CD8-positive, alpha-beta memory T cell (primary cell): ENCODE measurements at regions of chr12 and their contacts with region 1.

Region 1: DNA sequence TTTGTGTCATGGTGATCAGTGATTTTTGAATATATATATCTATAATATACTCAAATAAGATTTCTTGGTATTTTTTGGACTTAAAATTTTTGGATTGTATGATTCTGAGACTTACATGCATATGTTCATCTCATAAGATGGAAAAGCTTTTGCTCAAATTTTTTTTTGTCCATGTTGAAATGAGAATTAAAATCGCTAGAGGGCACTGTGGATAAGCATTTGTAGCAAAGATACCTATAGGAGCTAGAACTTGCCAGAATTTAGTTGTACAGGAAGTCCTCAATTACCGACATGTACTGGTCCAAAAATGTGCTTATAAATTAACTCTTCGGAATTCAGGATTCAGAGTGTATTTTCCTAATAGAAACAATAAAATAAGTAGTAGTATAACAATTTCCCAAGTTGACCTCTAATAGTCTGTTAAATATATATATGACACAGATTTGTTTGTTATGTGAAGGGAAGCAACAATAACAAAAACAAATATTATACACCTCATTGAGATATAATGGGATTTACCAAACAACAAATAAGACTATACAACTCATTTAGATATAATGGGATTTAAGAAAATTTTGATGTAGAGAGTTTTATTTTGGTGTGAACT is 179.6 kb downstream of the TMEM117 start:
- DNase-seq: peak in 2 of 5 donors; percentile 24 to 42
- H3K4me3 ChIP-seq: no peak overlapping the region
- H3K4me3 Mint-ChIP-seq: no peak overlapping the region
- H3K27ac ChIP-seq: no peak overlapping the region
- H3K27ac Mint-ChIP-seq: no peak overlapping the region
- H3K4me1 ChIP-seq: no peaks in the 10 kb centered on the region
- H3K4me1 Mint-ChIP-seq: peaks cover 0 to 3% (median 0%) of the 10 kb centered on the region in 3 donors
- H3K27me3 ChIP-seq: no peaks in the 10 kb centered on the region
- H3K27me3 Mint-ChIP-seq: peaks cover 0 to 2% of the 10 kb centered on the region in 2 donors

Region 2: GRCh38 chr12:43444940-43445564 is 570.4 kb before region 1 on chr12:
- CTCF ChIA-PET with region 1: no interaction called
- POLR2A ChIA-PET with region 1: no interaction called
- DNase-seq: peak; percentile 1 to 46 (median 21)
- H3K4me3 ChIP-seq: no peak overlapping the region
- H3K4me3 Mint-ChIP-seq: no peak overlapping the region
- H3K27ac ChIP-seq: no peak overlapping the region
- H3K27ac Mint-ChIP-seq: no peak overlapping the region
- H3K4me1 ChIP-seq: no peaks in the 10 kb centered on the region
- H3K4me1 Mint-ChIP-seq: no peaks in the 10 kb centered on the region
- H3K27me3 ChIP-seq: no peaks in the 10 kb centered on the region
- H3K27me3 Mint-ChIP-seq: peaks cover 0 to 2% of the 10 kb centered on the region in 2 donors

Region 3: DNA sequence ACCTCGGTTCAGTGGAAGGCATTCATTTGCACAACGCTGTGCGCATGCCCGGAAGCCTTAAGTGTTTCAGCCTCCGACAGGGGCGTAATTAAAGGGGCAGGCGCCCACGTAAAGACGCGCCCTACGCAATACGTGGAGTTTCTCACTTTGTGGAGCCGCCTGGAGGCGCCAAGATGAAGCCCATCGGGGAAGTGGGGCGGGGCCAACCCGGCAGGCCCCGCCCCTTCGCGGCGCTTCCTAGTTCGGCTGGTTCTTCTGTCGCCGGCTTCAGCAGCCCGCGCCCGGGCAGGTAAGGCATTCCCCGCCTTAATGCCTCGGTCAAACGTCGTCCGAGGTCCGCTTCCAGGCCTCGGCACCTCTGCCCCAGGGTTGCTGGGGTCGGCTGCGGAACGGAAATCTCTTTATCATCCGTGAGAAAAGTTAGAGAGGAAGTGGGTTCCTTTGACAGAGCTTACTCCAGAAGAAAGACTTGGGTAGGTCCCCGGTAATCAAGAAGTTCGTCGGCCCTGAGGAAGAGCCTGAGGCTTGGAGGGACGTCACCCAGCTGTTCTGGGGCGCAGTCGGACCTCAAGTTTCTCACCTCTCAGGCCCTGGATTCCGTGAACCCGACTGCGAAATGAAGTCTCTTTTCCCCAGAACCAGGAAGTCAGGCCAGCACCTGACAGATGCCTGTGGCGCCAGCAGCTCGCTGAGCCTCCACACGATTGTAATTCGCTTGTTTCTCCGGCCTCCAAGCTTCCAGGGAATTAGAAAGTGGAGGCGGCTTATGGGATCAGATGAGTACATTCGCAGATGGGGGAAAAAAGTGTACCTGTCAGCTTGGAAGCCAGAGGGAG is 256.5 kb before region 1 on chr12 and contains the starts of genes IRAK4 and PUS7L:
- CTCF ChIA-PET with region 1: no interaction called
- POLR2A ChIA-PET with region 1: no interaction called
- DNase-seq: peak; percentile 93 to 97 (median 94)
- H3K4me3 ChIP-seq: peak within 1 kb of the TSS; percentile 63
- H3K4me3 Mint-ChIP-seq: peak within 1 kb of the TSS; percentile 94 to 99 (median 98)
- H3K27ac ChIP-seq: peak within 1 kb of the TSS; percentile 93
- H3K27ac Mint-ChIP-seq: peak within 1 kb of the TSS; percentile 98 to 100 (median 99)
- H3K4me1 ChIP-seq: peaks cover 46% of the 10 kb centered on the region
- H3K4me1 Mint-ChIP-seq: peaks cover 73 to 90% (median 88%) of the 10 kb centered on the region in 3 donors
- H3K27me3 ChIP-seq: no peaks in the 10 kb centered on the region
- H3K27me3 Mint-ChIP-seq: peaks cover 0 to 2% of the 10 kb centered on the region in 2 donors
- total RNA-seq, gene IRAK4: 23.6 to 25.7 TPM
- total RNA-seq, gene PUS7L: 17.8 to 21.4 TPM

Region 4: GRCh38 chr12:43858096-43858495 is 157.3 kb before region 1 on chr12:
- CTCF ChIA-PET with region 1: no interaction called
- POLR2A ChIA-PET with region 1: no interaction called
- DNase-seq: no peak
- H3K4me3 ChIP-seq: no peak overlapping the region
- H3K4me3 Mint-ChIP-seq: no peak overlapping the region
- H3K27ac ChIP-seq: no peak overlapping the region
- H3K27ac Mint-ChIP-seq: no peak overlapping the region
- H3K4me1 ChIP-seq: no peaks in the 10 kb centered on the region
- H3K4me1 Mint-ChIP-seq: peaks cover 0 to 6% (median 1%) of the 10 kb centered on the region in 3 donors
- H3K27me3 ChIP-seq: no peaks in the 10 kb centered on the region
- H3K27me3 Mint-ChIP-seq: no peaks in the 10 kb centered on the region

Region 5: DNA sequence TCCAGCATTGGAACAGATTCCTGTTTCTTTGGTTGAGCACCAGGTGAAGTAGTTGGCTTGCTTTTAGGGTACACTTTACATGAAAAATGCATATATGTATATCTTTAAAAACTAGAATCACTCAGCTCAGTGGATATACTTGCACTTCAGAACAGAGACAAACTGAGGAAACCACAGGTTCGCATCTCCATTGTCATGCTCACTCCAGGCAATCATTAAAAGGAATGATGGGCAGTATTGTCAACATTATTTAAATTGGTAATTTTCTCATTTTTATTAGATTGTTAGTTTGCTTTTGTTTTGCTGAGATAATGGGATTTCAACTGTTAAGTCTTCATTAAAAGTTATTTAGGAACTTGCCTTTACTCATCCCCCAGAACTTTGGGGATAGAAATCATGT is 931.7 kb after region 1 on chr12:
- CTCF ChIA-PET with region 1: interaction called, 18 read pairs
- POLR2A ChIA-PET with region 1: no interaction called
- DNase-seq: no peak
- H3K4me3 ChIP-seq: no peak overlapping the region
- H3K4me3 Mint-ChIP-seq: no peak overlapping the region
- H3K27ac ChIP-seq: no peak overlapping the region
- H3K27ac Mint-ChIP-seq: no peak overlapping the region
- H3K4me1 ChIP-seq: no peaks in the 10 kb centered on the region
- H3K4me1 Mint-ChIP-seq: peaks cover 3 to 4% (median 4%) of the 10 kb centered on the region in 3 donors
- H3K27me3 ChIP-seq: no peaks in the 10 kb centered on the region
- H3K27me3 Mint-ChIP-seq: peaks cover 7 to 32% of the 10 kb centered on the region in 2 donors